Activated CD8-positive, alpha-beta memory T cell treated with anti-CD3 and anti-CD28 coated beads, Interleukin-2, amount 10 ng/mL, durations not matched to agents 7 days and 5 days (primary cell): ENCODE measurements at regions of chr7 and their contacts with region 1.

Region 1: DNA sequence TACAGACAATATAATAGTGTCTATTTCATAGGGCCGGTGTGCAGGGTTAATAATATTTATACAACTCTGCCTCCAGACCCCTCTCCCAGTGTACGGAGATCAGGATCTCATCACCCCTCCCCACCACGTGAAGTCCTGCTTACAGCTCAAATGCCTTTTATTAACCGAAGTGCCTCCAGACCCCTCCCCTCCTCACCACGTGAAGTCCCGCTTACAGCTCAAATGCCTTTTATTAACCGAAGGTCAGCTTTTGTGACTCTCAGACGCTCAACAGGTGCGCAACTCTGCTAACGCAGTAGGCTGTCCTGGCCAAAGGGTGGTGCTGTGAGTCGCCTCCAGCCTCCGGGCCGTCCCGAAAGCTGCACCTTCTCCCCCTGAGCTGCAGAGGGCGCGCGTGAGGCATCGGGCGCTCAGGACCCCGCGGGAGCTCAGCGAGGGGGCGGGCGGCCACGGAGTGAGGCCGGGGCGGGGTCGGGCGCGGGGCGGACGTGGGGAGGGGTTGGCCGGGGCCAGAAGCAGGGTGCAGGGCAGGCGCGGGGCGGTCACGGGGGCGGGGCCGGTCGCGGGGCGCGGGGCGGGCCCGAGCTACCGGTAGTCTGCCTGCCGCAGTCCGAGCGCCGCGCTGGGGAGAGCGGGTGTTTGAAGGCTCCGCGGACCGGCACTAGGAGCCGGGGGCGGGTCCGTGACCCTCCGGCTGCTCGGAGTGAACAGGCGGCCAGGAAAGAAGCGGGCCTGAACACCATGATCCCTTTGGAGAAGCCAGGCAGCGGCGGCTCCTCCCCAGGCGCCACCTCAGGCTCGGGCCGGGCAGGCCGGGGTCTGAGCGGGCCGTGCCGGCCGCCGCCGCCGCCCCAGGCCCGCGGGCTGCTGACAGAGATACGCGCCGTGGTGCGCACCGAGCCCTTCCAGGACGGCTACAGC is at the start of gene STK17A:
- DNase-seq: peak; percentile 95
- ATAC-seq: peak; percentile 82
- H3K4me3 Mint-ChIP-seq: peak within 1 kb of the TSS; percentile 98
- H3K27ac Mint-ChIP-seq: peak within 1 kb of the TSS; percentile 97
- H3K4me1 Mint-ChIP-seq: peaks cover 23% of the 10 kb centered on the region
- H3K27me3 Mint-ChIP-seq: peaks cover 18% of the 10 kb centered on the region
- total RNA-seq, gene STK17A: 84.9 to 86.1 TPM

Region 2: GRCh38 chr7:43572516-43573049 is 10.2 kb before region 1 on chr7:
- CTCF ChIA-PET with region 1: interaction called, 77 read pairs
- DNase-seq: peak; percentile 81
- ATAC-seq: peak; percentile 89
- H3K4me3 Mint-ChIP-seq: no peak overlapping the region
- H3K27ac Mint-ChIP-seq: peak overlapping the region; percentile 71
- H3K4me1 Mint-ChIP-seq: peaks cover 53% of the 10 kb centered on the region
- H3K27me3 Mint-ChIP-seq: no peaks in the 10 kb centered on the region

Region 3: GRCh38 chr7:43625453-43625852 is 42.7 kb after region 1 on chr7:
- CTCF ChIA-PET with region 1: interaction called, 90 read pairs
- DNase-seq: peak; percentile 83
- ATAC-seq: peak; percentile 86
- H3K4me3 Mint-ChIP-seq: peak overlapping the region; percentile 8
- H3K27ac Mint-ChIP-seq: peak overlapping the region; percentile 75
- H3K4me1 Mint-ChIP-seq: peaks cover 84% of the 10 kb centered on the region
- H3K27me3 Mint-ChIP-seq: no peaks in the 10 kb centered on the region

Region 4: GRCh38 chr7:43669286-43670081 is 86.7 kb after region 1 on chr7:
- CTCF ChIA-PET with region 1: interaction called, 29 read pairs
- DNase-seq: peak; percentile 91
- ATAC-seq: peak; percentile 90
- H3K4me3 Mint-ChIP-seq: peak overlapping the region; percentile 61
- H3K27ac Mint-ChIP-seq: peak overlapping the region; percentile 93
- H3K4me1 Mint-ChIP-seq: peaks cover 63% of the 10 kb centered on the region
- H3K27me3 Mint-ChIP-seq: no peaks in the 10 kb centered on the region

Region 5: DNA sequence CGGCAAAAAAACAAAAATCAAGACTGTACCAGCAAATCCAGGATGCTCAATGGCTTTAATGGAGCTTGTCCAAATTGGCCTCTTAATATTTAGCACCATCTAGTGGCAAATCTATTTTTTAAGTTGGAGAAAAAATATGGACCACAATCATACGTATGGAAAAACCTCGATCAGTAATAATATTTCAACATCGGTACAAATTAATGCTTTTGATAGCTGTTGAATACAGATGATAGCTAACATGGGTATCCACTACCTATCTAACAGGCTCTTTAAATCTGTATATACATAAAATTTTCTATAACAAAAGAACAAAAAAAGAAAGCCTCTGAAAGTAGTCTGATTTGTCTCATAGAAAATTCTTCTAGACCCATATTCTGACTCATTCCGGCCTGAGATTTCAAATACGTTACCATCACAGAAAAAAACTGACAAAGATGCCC is 117.3 kb after region 1 on chr7:
- CTCF ChIA-PET with region 1: interaction called, 332 read pairs
- DNase-seq: no peak
- ATAC-seq: peak; percentile 73
- H3K4me3 Mint-ChIP-seq: no peak overlapping the region
- H3K27ac Mint-ChIP-seq: peak overlapping the region; percentile 47
- H3K4me1 Mint-ChIP-seq: peaks cover 66% of the 10 kb centered on the region
- H3K27me3 Mint-ChIP-seq: no peaks in the 10 kb centered on the region

Region 6: GRCh38 chr7:43729214-43729923 is 146.6 kb after region 1 on chr7 and contains the start of gene COA1:
- CTCF ChIA-PET with region 1: interaction called, 115 read pairs
- DNase-seq: peak; percentile 85
- ATAC-seq: peak; percentile 96
- H3K4me3 Mint-ChIP-seq: peak within 1 kb of the TSS; percentile 94
- H3K27ac Mint-ChIP-seq: peak within 1 kb of the TSS; percentile 86
- H3K4me1 Mint-ChIP-seq: peaks cover 33% of the 10 kb centered on the region
- H3K27me3 Mint-ChIP-seq: peaks cover 3% of the 10 kb centered on the region
- total RNA-seq, gene COA1: 66.7 to 73.0 TPM